B cell (primary cell): ENCODE measurements at regions of chr2 and their contacts with region 1.

Region 1: DNA sequence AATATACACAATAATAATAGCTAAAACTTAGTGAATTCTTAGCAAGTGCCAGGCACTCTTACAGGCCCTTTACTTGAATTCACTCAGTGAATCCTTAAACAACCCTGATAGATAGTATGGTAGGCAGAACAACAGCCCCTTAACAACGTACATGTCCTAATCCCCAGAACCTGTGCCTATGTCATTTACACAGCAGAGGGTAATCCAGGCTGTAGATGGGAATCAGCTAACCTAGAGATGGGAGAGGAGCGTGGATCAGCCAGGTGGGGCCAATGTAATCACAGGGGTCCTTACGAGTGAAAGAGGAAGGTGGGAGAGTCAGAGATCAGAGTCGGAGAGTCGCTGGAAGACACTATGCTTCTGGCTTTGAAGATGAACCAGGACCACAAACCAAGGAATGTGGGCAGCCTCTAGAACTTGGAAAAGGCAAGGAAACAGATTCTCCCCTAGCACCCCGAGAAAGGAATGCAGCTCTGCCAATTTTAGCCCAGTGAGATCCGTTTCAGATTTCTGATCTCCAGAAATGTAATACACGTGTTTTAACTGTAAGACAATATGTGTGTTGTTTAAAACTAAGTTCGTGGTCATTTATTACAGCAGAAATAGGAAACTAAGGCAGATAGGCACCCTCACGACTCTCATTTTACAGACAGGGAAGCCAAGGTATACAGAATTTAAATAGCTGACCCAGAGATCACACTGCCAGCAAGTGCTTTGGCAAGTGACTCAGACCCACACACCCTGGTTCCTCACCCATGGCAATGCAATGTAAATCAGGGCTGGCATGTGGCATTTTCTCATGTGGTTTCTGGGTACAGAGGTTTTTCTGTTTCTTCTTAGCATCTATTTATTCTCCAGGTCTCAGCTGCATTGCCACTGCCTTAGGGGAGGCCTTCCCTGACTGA is 68.9 kb downstream of the DOCK10 start:
- DNase-seq: peak; percentile 59
- ATAC-seq: peak; percentile 77
- H3K4me3 ChIP-seq: peak overlapping the region in 1 of 5 experiments; percentile 15
- H3K4me3 Mint-ChIP-seq: peak overlapping the region; percentile 75
- H3K27ac ChIP-seq: peak overlapping the region; percentile 76 to 79
- H3K27ac Mint-ChIP-seq: peak overlapping the region; percentile 96
- H3K4me1 ChIP-seq: peaks cover 47 to 49% of the 10 kb centered on the region in 2 donors
- H3K4me1 Mint-ChIP-seq: peaks cover 73% of the 10 kb centered on the region
- H3K27me3 ChIP-seq: no peaks in the 10 kb centered on the region
- H3K27me3 Mint-ChIP-seq: no peaks in the 10 kb centered on the region
- CTCF ChIP-seq: no peak

Region 2: DNA sequence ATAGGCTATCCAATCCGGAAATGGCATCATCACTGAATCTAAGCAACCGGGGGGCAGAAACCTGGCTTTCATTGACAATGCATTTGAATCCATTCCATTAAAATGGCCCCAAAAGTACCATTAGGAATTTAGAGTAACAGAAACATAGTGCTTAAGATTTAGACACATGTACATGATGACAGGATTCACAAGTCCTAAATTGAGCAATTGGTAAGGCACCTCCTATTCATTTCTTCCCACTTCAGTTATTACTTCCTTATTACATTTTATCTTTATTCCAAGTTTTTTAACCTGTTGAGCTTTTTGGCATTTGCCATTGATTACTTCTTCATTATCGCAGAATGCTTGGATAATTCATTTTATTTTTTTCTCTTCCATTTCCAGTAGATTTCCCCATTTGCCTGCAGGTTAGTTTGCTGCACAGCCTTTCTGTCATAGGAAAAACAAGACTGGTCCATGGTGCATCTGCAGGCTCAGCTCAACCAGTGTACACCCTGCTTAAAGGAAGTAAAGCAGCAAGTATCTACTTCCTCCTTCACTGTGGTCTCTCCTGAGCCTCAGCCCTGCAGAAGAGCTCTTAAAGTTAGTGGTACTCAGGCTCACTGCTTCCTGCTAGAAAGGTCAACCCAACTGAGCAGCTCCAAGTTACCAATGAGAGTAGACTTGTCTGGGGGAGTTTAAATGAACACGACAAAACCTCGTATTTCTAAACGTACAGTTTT is 20.3 kb before region 1 on chr2:
- CTCF ChIA-PET with region 1: interaction called, 11 read pairs
- POLR2A ChIA-PET with region 1: interaction called, 4 read pairs
- intact Hi-C with region 1: loop called (anchors 1 kb)
- DNase-seq: peak; percentile 79
- ATAC-seq: peak; percentile 89
- H3K4me3 ChIP-seq: no peak overlapping the region
- H3K4me3 Mint-ChIP-seq: peak overlapping the region; percentile 50
- H3K27ac ChIP-seq: peak overlapping the region; percentile 19 to 52
- H3K27ac Mint-ChIP-seq: peak overlapping the region; percentile 85
- H3K4me1 ChIP-seq: peaks cover 63 to 64% of the 10 kb centered on the region in 2 donors
- H3K4me1 Mint-ChIP-seq: peaks cover 86% of the 10 kb centered on the region
- H3K27me3 ChIP-seq: no peaks in the 10 kb centered on the region
- H3K27me3 Mint-ChIP-seq: no peaks in the 10 kb centered on the region
- CTCF ChIP-seq: no peak